Activated CD4-positive, alpha-beta memory T cell treated with anti-CD3 and anti-CD28 coated beads for 36 hours (primary cell): ENCODE measurements at regions of chr17 and their contacts with region 1.

Region 1: DNA sequence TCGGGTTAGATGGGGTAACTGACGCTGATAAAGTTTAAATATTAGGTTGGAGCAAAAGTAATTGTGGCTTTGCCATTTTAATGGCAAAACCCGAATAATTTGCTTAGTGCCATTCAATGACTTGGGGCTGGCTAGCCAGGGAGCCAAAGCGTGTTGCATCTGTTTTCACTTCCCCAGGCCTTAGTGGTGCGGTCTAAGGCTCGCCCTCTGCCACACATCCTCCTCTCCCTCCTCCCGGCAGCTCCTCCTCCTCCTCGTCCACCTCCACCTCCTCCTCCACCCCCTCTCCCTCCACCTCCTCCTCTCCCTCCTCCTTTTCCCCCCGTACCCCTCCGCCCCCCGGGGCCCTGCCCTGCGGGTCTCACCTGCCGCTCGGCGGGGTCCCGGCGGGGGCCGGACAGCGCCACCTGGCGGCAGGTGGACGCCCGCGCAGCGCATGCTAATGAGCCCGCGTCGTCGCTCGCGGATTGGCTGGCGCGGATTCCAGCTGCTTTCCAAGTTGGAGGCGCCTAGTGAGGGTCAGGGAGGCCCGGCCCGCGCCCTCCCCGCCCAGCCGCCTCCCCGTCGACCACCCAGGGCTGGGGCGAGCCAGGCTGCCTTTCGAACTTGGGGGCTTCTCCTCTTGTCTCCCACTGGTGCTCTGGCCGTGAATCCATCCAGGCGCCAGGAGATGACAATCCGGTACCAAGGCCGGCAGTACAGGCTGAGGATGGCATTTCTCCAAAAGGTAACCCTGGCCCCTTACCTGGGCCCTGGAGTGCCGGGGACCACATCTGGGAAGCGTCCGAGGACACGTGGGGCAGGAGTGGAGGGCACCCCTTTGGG is 36.6 kb upstream of the RGS9 start:
- DNase-seq: peak; percentile 85
- H3K4me3 Mint-ChIP-seq: peak overlapping the region; percentile 76
- H3K27ac Mint-ChIP-seq: peak overlapping the region; percentile 85
- H3K4me1 Mint-ChIP-seq: peaks cover 25% of the 10 kb centered on the region
- H3K27me3 Mint-ChIP-seq: no peaks in the 10 kb centered on the region

Region 2: DNA sequence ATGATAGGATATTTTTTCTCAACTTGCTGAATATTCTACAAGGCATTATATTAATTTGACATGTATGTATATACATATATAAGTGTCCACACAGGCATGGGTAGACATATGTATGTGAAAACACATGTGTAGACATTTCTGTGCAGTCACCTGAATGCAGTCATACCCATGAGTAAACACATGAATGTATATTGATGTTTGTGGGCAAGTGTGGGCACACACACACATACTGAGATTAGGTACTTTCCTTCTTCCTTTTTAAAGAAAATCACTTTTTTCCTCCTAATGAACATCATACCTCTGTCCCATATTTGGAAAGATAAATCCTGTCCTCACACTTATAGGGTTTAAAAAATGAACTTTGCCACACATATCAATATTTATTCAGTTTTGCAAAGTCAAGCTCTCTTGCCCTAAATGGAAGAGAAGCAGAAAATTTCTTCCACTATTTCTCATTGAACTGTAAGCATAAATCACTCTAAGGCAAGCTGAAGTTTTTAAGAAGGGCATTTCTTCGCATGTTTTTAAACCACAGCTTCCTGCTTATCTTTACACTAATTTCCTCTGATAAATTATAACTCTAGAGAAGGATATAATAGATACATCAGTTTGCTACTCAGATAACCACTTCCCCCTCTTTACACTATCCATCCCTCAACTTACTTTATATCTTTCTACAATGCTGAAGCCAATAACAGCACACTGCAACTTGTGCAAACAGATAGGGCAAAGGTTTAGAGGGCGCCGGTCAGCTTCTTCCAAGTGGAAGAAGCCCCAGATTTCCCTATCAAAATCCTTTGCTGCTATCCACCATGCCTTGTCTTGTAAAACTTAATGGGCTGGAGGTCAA is 131.7 kb before region 1 on chr17:
- CTCF ChIA-PET with region 1: interaction called, 16 read pairs
- POLR2A ChIA-PET with region 1: interaction called, 4 read pairs
- intact Hi-C with region 1: loop called (anchors 1 kb)
- DNase-seq: peak; percentile 46
- H3K4me3 Mint-ChIP-seq: peak overlapping the region; percentile 7
- H3K27ac Mint-ChIP-seq: peak overlapping the region; percentile 78
- H3K4me1 Mint-ChIP-seq: peaks cover 69% of the 10 kb centered on the region
- H3K27me3 Mint-ChIP-seq: no peaks in the 10 kb centered on the region

Region 3: DNA sequence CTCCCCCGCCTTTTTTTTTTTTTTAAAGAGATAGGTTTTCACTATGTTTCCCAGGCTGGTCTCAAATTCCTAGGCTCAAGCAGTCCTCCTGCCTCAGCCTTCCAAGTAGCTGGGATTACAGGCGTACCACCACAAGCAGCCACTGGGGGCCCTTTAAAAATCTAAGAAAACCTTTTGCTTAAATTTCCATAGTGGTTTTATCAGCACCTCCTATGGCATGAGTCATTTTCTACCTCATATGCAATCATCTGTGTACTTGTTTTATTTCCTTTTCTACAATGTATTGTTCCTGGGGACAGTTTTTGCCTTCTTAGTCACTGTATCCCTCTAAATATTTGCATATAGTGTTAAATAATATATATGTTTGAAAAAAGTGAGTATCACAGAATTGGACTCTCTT is 73.2 kb before region 1 on chr17:
- CTCF ChIA-PET with region 1: interaction called, 12 read pairs
- POLR2A ChIA-PET with region 1: no interaction called
- intact Hi-C with region 1: loop called (anchors 1 kb)
- DNase-seq: peak; percentile 75
- H3K4me3 Mint-ChIP-seq: peak overlapping the region; percentile 62
- H3K27ac Mint-ChIP-seq: peak overlapping the region; percentile 96
- H3K4me1 Mint-ChIP-seq: peaks cover 83% of the 10 kb centered on the region
- H3K27me3 Mint-ChIP-seq: no peaks in the 10 kb centered on the region

Region 4: GRCh38 chr17:65055348-65056261 is 44.9 kb before region 1 on chr17:
- CTCF ChIA-PET with region 1: interaction called, 14 read pairs
- POLR2A ChIA-PET with region 1: interaction called, 3 read pairs
- intact Hi-C with region 1: loop called (anchors 1 kb)
- DNase-seq: peak; percentile 65
- H3K4me3 Mint-ChIP-seq: peak overlapping the region; percentile 98
- H3K27ac Mint-ChIP-seq: peak overlapping the region; percentile 99
- H3K4me1 Mint-ChIP-seq: peaks cover 45% of the 10 kb centered on the region
- H3K27me3 Mint-ChIP-seq: no peaks in the 10 kb centered on the region

Region 5: GRCh38 chr17:65117384-65118035 is 17.0 kb after region 1 on chr17:
- CTCF ChIA-PET with region 1: interaction called, 26 read pairs
- POLR2A ChIA-PET with region 1: interaction called, 9 read pairs
- intact Hi-C with region 1: loop called (anchors 1 kb)
- DNase-seq: no peak
- H3K4me3 Mint-ChIP-seq: no peak overlapping the region
- H3K27ac Mint-ChIP-seq: no peak overlapping the region
- H3K4me1 Mint-ChIP-seq: peaks cover 14% of the 10 kb centered on the region
- H3K27me3 Mint-ChIP-seq: peaks cover 11% of the 10 kb centered on the region

Region 6: DNA sequence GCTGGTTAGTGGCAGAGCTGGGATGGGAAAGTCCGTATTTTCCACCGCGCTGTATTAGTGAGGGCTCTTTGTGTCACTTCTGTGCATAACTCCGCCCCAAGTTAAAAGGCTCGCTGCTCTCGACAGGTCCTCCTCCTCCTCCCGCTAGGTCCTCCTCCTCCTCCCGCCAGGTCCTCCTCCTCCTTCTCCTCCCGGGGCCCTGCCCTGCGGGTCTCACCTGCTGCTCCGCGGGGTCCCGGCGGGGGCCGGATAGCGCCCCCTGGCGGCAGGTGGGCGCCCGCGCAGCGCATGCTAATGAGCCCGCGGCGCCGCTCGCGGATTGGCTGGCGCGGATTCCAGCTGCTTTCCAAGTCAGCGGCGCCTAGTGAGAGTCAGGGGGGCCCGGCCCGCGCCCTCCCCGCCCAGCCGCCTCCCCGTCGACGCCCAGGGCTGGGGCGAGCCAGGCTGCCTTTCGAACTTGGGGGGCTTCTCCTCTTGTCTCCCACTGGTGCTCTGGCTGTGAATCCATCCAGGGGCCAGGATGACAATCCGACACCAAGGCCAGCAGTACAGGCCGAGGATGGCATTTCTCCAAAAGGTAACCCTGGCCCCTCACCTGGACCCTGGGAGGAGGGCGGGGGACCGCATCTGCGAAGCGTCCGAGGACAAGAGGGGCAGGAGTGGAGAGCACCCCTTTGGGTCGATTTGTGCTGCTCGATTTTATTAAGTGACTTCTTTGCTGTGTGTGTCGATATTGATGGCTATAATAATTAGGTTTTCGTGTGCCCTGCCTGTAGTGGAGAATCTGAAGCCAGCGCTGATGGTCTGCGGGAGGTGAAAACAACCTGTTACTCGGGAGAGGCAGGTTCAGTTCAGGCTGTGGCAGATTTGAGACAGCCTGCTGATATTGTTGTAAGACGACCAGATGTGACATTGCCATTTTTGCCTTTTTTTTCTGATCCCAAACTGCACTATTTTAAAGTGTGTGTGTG is 36.8 kb after region 1 on chr17 and contains the start of gene RGS9:
- CTCF ChIA-PET with region 1: interaction called, 10 read pairs
- POLR2A ChIA-PET with region 1: interaction called, 3 read pairs
- intact Hi-C with region 1: loop called (anchors 1 kb)
- DNase-seq: peak; percentile 89
- H3K4me3 Mint-ChIP-seq: peak within 1 kb of the TSS; percentile 72
- H3K27ac Mint-ChIP-seq: no peak within 1 kb of the TSS
- H3K4me1 Mint-ChIP-seq: peaks cover 27% of the 10 kb centered on the region
- H3K27me3 Mint-ChIP-seq: peaks cover 11% of the 10 kb centered on the region
- total RNA-seq, gene RGS9: 6.4 to 8.7 TPM